GM10248 (cell line): ENCODE measurements at regions of chr12 and their contacts with region 1.

Region 1: GRCh38 chr12:53543539-53543938 is 36.3 kb upstream of the NPFF start:
- DNase-seq: peak; percentile 78
- CTCF ChIP-seq: peak; percentile 75

Region 2: DNA sequence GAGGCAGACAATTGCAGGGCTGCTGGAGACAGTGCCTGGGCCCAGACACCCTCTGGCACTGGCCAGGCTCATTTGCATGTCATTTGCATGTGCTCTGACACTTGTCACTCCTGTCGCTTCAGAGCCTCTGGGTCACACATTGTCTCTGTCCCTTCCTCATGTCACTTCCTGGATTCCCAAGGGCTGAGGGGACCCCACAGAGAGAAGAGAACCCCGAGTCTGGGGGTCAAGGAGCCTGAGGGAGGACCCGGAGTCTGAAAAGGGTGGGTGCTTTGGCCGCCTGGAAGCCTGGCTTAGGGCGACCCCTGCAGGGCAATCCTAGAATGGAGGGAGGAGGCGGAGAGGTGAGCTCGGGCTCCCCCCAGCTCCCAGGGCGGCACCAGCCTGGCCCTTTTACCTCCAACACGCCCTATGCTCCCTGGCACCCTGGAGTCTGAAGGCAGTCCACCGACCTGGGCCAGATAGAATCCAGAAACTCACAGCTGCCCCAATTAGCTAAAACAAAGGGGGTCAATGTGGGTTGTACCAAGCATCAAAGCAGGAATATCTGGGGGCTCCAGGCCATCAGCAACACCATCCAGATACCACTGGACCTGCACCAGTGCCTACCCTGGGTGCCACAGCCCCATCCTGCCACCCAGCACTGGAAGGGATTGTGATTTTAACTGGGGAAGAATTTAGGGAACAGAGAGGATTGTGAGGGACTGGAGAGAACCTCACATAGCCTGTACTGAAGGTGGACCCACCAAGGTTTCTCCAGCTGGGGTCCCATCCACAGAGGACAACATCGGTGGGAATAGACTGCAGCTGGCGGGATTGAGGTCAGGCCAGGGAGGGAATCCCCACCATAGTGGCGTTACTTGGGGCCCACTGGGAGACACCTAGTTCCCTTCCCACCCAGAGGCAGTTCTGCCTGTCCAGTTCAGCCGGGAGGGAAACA is 672.9 kb before region 1 on chr12:
- CTCF ChIA-PET with region 1: no interaction called
- POLR2A ChIA-PET with region 1: no interaction called
- DNase-seq: peak; percentile 79
- CTCF ChIP-seq: peak; percentile 63

Region 3: DNA sequence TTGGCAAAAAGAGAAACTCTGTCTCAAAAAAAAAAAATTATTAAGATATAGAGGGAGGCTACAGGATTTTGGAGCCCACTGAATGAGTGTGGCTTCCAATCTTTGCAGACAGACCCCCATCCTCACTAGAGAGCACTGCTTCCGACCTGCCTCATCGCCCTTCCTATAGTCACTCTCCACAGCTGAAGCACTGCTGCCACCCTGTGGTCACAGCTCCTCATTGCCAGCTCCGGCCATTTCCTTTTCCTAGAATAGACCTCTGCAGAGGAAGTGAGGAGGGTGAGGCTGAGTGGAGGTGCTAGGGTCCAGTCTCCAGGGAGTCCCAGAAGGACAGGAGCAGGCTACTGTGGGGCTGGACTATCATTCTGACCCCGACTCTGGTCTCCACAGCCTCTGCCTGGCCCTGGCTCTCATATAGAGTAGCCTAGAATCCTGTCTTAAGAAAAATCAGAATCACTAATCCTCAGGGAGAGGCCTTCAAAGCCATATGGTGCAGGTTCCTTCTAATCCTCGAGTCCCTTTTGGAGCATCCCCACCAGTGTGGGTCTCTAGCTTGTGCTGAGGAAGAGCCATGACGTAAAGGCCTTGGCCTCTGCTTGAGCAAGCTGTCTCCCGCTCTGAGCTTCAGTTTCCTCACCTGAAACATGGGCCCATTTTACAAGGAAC is 34.9 kb before region 1 on chr12:
- CTCF ChIA-PET with region 1: interaction called, 14 read pairs
- POLR2A ChIA-PET with region 1: no interaction called
- DNase-seq: peak; percentile 82
- CTCF ChIP-seq: peak; percentile 99

Region 4: DNA sequence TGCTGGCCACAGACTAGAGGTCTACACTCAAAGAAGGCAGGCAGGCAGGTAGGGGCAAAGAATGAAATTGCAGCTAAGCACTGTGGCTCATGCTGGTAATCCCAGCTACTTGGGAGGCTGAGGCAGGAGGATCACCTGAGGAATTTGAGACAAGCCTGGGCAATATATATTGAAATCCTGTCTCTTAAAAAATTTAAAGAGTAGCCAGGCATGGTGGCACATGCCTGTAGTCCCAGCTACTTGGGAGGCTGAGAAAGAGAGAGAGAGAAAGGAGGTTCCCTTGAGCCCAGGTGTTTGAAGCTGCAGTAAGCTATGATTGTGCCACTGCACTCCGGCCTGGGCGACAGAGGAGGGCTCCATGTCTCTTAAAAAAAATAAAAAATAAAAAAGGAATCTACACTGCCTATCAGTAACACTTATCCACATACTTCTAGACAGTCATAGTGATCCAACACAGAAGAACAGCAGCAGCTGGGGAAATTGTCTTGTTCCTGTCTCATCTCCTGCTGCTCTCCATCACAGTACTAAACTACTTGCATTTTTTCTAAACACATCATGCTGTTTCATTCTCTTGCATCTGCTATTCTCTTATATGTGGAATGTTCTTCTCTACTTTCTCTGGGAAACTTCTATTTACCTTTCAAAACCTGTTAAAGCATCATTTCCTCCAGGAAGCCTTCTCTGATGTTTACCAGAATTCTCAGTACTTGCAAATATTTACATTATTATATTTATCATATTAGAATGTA is 25.4 kb after region 1 on chr12:
- CTCF ChIA-PET with region 1: interaction called, 12 read pairs
- POLR2A ChIA-PET with region 1: no interaction called
- DNase-seq: no peak
- CTCF ChIP-seq: no peak

Region 5: GRCh38 chr12:53618275-53618674 is 74.7 kb after region 1 on chr12:
- CTCF ChIA-PET with region 1: interaction called, 17 read pairs
- POLR2A ChIA-PET with region 1: no interaction called
- DNase-seq: no peak
- CTCF ChIP-seq: no peak

Region 6: DNA sequence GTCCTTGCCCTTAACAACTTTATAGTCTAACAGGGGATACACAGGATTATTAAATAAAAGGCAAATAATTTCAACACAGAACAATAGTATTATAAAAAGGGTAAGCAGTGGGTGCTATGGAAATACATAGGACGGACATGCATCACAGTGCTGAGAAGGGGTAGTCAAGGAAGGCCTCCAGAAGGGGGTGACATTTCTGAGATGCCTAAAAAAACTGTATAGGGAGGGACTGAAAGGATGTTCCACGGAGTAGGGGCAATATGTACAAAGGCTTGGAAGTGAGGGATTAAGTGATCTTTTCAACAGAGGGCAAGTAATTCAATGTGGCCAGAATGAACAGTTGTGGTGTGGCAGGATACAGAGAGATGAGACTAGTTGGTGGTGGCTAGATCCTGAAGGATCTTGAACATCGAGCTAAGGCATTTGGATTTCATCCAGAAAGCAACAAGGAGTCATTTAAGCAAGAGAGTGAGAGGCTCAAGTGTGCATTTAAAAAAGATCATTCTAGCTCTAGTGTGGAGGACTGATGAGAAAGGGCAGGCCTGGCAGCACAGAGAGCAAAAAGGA is 141.2 kb after region 1 on chr12:
- CTCF ChIA-PET with region 1: interaction called, 213 read pairs
- POLR2A ChIA-PET with region 1: no interaction called
- DNase-seq: no peak
- CTCF ChIP-seq: no peak

Region 7: GRCh38 chr12:53746592-53747092 is 203.1 kb after region 1 on chr12:
- CTCF ChIA-PET with region 1: interaction called, 88 read pairs
- POLR2A ChIA-PET with region 1: interaction called, 3 read pairs
- DNase-seq: peak; percentile 86
- CTCF ChIP-seq: peak; percentile 100